GM13976 (cell line): ENCODE measurements at regions of chr9 and their contacts with region 1.

Region 1: DNA sequence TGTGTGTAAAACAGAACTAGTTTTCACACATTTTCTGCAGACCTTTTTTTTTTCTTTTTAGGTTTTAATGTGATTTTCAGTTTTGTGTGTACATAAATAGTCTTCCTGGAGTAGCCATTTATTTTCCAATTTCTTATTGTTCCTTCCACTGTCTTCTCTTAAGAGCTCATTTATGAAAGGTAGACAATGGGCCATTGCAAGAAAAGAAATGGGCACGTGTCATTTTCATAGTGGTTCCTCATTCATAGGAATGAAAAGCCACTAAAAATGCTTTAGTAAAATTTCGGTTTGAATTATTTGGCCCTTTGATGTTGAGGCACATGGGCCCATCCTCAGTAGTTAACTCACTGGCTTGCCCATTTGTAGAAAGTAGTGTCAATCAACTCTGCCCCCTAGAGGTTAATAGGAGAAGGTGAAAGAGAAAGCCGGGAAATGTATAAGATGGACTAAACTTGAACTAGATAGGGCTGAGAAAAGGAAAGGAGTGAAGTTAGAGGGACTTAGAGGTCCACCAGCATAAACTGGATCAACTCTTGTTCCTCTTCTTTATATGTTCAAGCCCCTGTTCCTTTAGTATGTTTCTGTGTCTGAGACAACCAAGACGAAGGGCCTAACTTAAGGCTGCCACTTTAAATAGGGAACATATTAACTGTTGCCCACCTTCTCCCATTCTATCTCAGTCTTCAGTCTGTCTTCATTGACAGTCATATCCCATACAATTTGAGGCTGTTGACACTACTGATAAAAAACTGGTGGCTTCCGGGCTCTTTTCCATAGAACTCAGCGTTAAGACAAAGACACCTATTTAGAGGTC is 72.6 kb downstream of the SMARCA2 start:
- DNase-seq: peak; percentile 53
- CTCF ChIP-seq: peak; percentile 44

Region 2: GRCh38 chr9:1709345-1709744 is 378.4 kb before region 1 on chr9:
- in situ Hi-C with region 1: loop called (anchors 25 kb)
- DNase-seq: peak; percentile 23
- CTCF ChIP-seq: no peak

Region 3: DNA sequence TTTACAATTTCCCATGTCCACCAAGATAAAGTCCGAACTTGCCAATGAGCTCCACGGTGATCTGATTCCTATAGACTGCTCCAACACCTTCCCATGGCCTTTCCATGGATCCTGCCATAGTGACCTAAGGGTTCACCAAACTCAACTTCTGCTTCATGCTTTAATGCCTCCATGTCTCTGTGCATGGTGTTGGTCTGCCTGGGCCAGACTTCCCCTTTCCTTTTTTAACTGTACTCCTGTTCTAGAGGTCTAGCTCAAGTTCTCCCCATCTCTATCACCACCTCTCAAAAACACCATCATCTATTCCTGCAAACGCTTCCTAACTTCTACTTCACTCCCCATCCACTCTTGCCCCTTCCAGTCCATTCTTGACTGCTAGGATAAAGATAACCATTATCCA is 87.4 kb before region 1 on chr9:
- in situ Hi-C with region 1: no loop called
- DNase-seq: no peak
- CTCF ChIP-seq: no peak